Left lung (tissue), 14 donors: ENCODE measurements at regions of chr17 and their contacts with region 1.

Region 1: GRCh38 chr17:19766422-19767270 is 18.5 kb upstream of the ALDH3A1 start:
- DNase-seq: peak; percentile 65 to 94 (median 76)
- ATAC-seq: peak; percentile 94
- H3K4me3 ChIP-seq: no peak overlapping the region
- H3K27ac ChIP-seq: no peak overlapping the region
- H3K4me1 ChIP-seq: peaks cover 0 to 4% of the 10 kb centered on the region in 2 donors
- H3K27me3 ChIP-seq: no peaks in the 10 kb centered on the region
- CTCF ChIP-seq: peak; percentile 91 to 94

Region 2: GRCh38 chr17:19513897-19514488 is 252.7 kb before region 1 on chr17:
- intact Hi-C with region 1: loop called (anchors 2 to 10 kb)
- DNase-seq: peak in 3 of 4 donors; percentile 58 to 82 (median 67)
- ATAC-seq: peak; percentile 90
- H3K4me3 ChIP-seq: no peak overlapping the region
- H3K27ac ChIP-seq: no peak overlapping the region
- H3K4me1 ChIP-seq: peaks cover 0 to 7% of the 10 kb centered on the region in 2 donors
- H3K27me3 ChIP-seq: no peaks in the 10 kb centered on the region
- CTCF ChIP-seq: peak; percentile 76 to 90

Region 3: GRCh38 chr17:19672009-19672750 is 94.5 kb before region 1 on chr17:
- intact Hi-C with region 1: no loop called
- DNase-seq: peak in 2 of 4 donors; percentile 29 to 49
- ATAC-seq: peak; percentile 61
- H3K4me3 ChIP-seq: no peak overlapping the region
- H3K27ac ChIP-seq: peak overlapping the region; percentile 13 to 61
- H3K4me1 ChIP-seq: peaks cover 11 to 30% of the 10 kb centered on the region in 2 donors
- H3K27me3 ChIP-seq: no peaks in the 10 kb centered on the region
- CTCF ChIP-seq: no peak